Activated CD4-positive, alpha-beta T cell treated with anti-CD3 and anti-CD28 coated beads, Interleukin-2, amount 10 ng/mL, durations not matched to agents 24 days and 14 days (primary cell): ENCODE measurements at regions of chr3 and their contacts with region 1.

Region 1: GRCh38 chr3:119912220-119912619 is 130.3 kb downstream of the NR1I2 start:
- DNase-seq: no peak
- H3K4me3 Mint-ChIP-seq: peak overlapping the region; percentile 49
- H3K27ac Mint-ChIP-seq: peak overlapping the region; percentile 79
- H3K4me1 Mint-ChIP-seq: peaks cover 20% of the 10 kb centered on the region
- H3K27me3 Mint-ChIP-seq: no peaks in the 10 kb centered on the region

Region 2: DNA sequence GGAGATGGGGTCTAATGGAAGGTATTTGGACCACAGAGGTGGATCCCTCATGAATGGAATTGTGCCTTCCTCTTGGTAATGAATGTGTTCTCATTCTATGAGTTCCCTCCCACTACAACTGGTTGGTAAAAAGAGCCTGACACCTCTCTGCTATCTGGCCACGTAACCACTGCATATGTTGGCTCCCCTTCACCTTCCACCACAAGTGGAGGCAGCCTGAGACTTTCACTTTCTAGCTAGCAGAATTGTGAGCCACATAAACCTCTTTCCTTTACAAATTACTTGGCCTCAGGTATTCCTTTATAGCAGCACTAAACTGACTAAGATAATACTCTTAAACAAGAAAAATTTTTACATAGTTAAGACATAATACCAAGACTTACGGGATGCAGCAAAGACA is 25.0 kb after region 1 on chr3:
- intact Hi-C with region 1: loop called (anchors 1 kb)
- DNase-seq: peak; percentile 84
- H3K4me3 Mint-ChIP-seq: peak overlapping the region; percentile 60
- H3K27ac Mint-ChIP-seq: peak overlapping the region; percentile 54
- H3K4me1 Mint-ChIP-seq: peaks cover 24% of the 10 kb centered on the region
- H3K27me3 Mint-ChIP-seq: peaks cover 2% of the 10 kb centered on the region

Region 3: GRCh38 chr3:119950666-119951325 is 38.6 kb after region 1 on chr3:
- intact Hi-C with region 1: no loop called
- DNase-seq: no peak
- H3K4me3 Mint-ChIP-seq: no peak overlapping the region
- H3K27ac Mint-ChIP-seq: no peak overlapping the region
- H3K4me1 Mint-ChIP-seq: peaks cover 2% of the 10 kb centered on the region
- H3K27me3 Mint-ChIP-seq: no peaks in the 10 kb centered on the region